ENCODE measurements at regions of chr11 and their contacts with region 1.

Region 1: DNA sequence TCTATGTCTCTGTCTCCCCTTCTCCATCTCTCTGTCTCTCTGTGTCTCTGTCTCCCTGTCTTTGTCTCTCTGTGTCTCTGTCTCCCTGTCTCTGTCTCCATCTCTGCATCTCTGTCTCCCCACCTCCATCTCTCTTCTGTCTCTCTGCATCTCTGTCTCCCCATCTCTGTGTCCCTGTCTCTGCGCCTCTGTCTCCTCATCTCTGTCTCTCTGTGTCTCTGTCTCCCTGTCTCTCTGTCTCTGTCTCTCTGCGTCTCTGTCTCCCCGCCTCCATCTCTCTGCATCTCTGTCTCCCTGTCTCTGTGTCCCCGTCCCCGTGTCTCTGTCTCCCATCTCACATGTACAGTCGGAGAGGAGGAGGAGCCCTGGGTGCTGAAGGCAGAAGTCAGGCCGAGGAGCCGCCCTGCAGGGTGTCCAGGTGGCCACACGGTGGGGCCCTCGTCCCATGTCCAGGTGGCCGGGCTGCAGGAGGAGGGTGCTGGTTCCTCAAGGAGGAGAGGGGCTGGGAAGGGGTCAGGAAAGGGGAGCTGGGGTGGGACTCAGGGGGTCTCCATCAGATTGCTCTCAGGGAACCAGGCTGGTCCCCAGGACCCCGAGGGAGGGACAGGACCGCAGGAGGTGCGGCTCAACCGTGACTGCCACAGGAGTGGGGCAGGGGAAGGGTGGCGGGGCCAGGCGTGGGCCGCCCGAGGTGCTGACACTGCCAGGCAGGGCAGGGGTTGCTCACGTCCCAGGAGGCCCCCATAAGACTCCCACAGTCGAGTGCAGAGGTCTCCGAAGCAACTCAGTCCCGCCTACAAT is 25.6 kb upstream of the TH start:
- DNase-seq: peak; percentile 87 to 92
- H3K4me3 ChIP-seq: no peak overlapping the region
- H3K27ac ChIP-seq: no peak overlapping the region
- H3K4me1 ChIP-seq: peaks cover 4 to 18% (median 15%) of the 10 kb centered on the region in 4 donors
- H3K27me3 ChIP-seq: peaks cover 0 to 36% (median 4%) of the 10 kb centered on the region in 3 donors
- CTCF ChIP-seq: peak in 5 of 7 experiments; percentile 90 to 96 (median 93)
- EP300 ChIP-seq: no peak
- POLR2A ChIP-seq: no peak

Region 2: DNA sequence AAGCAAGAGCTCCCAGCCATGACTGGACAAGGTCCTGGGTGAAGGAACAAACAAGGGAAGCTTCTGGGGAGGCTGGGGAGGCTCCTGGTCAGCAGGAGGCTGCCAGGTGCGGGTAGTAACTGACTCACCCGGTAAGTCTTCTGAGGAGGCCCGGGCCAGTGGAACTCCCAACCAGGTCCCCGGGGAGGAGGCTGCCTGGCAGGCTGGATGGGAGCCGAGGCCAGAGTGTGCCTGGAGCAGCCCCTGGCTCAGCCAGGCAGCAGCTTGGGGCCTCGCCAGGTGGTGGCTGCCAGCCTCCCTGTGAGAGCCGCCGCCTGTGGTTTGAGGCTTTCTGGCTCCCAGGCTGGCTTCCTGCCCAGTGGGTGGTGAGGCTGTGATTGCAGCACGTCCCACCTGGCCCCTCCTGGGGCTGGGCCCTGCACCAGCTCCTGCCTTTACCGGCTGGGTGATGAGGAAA is 104.2 kb before region 1 on chr11:
- intact Hi-C with region 1: no loop called
- DNase-seq: peak; percentile 92 to 98
- H3K4me3 ChIP-seq: no peak overlapping the region
- H3K27ac ChIP-seq: peak overlapping the region; percentile 44 to 77 (median 68)
- H3K4me1 ChIP-seq: peaks cover 26 to 46% (median 42%) of the 10 kb centered on the region in 4 donors
- H3K27me3 ChIP-seq: peaks cover 0 to 18% (median 0%) of the 10 kb centered on the region in 3 donors
- CTCF ChIP-seq: no peak
- EP300 ChIP-seq: no peak
- POLR2A ChIP-seq: no peak

Region 3: GRCh38 chr11:2298795-2299761 is 101.9 kb after region 1 on chr11:
- intact Hi-C with region 1: loop called (anchors 5 kb)
- DNase-seq: peak; percentile 48 to 80
- H3K4me3 ChIP-seq: no peak overlapping the region
- H3K27ac ChIP-seq: no peak overlapping the region
- H3K4me1 ChIP-seq: peaks cover 22 to 45% (median 27%) of the 10 kb centered on the region in 4 donors
- H3K27me3 ChIP-seq: no peaks in the 10 kb centered on the region
- CTCF ChIP-seq: peak in 3 of 7 experiments; percentile 18 to 47 (median 41)
- EP300 ChIP-seq: no peak
- POLR2A ChIP-seq: no peak

Region 4: DNA sequence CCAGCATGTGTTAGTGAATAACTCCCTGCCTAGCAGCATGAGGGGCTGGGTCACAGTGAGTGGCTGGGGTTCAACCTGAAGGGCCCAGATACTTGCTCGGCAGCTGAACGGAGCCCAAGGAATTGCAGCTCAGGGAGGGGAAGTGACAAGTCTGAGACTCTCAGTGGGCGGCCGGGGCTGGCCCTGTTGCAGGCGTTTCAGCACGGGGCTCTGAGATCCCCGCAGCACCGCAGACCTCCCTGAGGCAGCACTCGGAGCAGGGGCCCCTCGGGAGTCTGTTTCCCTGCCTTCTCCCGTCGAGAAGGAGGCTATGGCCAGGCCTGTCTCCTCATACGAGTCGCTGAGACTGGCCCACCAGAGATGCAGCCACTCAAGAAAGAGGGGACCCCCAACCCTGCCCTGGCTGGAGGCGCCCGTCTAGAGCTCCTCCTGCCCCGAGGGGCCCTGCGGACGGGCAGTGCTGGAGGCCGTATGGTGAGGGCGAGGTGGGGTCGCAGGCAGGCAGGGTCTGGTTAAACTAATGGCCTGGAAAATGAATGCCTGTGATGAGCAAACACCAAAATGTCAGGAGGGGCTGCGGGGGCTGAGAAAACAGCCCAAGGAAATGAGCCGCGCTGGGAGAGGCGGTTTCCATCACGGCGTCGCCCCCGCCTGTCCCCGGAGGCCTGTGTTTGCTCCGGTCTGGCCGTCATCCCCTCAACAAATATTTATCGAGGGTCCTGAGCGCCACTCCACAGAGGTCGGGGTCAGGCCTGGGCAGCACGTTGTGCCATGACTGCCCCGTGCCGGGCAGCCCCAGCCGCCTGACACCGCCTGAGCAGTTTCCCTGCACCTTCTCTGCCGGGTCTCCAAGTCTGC is 212.7 kb after region 1 on chr11:
- intact Hi-C with region 1: loop called (anchors 5 kb)
- DNase-seq: peak in 1 of 2 donors; percentile 64
- H3K4me3 ChIP-seq: no peak overlapping the region
- H3K27ac ChIP-seq: no peak overlapping the region
- H3K4me1 ChIP-seq: peaks cover 0 to 7% (median 2%) of the 10 kb centered on the region in 4 donors
- H3K27me3 ChIP-seq: peaks cover 0 to 12% (median 11%) of the 10 kb centered on the region in 3 donors
- CTCF ChIP-seq: no peak
- EP300 ChIP-seq: no peak
- POLR2A ChIP-seq: no peak

Region 5: DNA sequence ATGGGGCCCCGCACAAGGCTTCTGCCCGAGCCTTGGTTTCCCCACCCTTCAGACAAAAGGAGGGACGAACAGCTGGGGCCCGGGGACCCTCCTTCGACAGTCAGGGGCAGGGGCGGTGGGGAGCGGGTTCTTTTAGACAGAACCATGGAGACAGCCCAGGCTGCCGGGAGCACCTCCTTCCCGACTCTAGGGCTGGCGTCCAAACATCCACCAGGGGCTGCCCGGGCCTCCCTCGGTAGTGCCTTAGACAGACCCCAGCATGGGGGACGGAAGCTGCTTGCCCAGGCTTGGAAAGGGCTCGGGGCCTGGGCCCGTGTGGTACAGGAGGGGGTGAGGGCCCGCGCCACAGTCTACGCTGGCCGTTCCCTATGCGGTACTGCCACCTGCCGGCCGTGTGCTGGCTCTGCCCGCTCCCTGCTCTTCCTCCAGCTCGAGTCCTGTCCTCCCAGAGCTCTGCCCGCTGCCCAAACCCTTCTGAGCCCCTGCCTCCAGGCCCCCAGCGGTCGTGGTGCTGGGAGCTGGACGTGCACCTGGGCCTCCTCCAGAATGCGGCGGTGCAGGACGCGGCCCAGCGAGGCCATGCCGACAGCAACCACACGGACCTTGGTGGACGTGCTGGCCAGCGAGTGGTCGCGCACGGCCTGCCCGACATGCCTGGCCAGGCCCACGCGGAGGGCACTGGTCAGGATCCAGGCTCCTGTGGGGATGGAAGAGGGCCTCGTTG is 223.5 kb after region 1 on chr11:
- intact Hi-C with region 1: loop called (anchors 2 kb)
- DNase-seq: peak; percentile 77 to 95
- H3K4me3 ChIP-seq: no peak overlapping the region
- H3K27ac ChIP-seq: peak overlapping the region in 1 of 5 donors; percentile 66
- H3K4me1 ChIP-seq: peaks cover 9 to 17% (median 14%) of the 10 kb centered on the region in 4 donors
- H3K27me3 ChIP-seq: peaks cover 0 to 28% (median 5%) of the 10 kb centered on the region in 3 donors
- CTCF ChIP-seq: peak in 5 of 7 experiments; percentile 87 to 93 (median 92)
- EP300 ChIP-seq: no peak
- POLR2A ChIP-seq: no peak